Endothelial cell of umbilical vein (primary cell): ENCODE measurements at regions of chr20 and their contacts with region 1.

Region 1: DNA sequence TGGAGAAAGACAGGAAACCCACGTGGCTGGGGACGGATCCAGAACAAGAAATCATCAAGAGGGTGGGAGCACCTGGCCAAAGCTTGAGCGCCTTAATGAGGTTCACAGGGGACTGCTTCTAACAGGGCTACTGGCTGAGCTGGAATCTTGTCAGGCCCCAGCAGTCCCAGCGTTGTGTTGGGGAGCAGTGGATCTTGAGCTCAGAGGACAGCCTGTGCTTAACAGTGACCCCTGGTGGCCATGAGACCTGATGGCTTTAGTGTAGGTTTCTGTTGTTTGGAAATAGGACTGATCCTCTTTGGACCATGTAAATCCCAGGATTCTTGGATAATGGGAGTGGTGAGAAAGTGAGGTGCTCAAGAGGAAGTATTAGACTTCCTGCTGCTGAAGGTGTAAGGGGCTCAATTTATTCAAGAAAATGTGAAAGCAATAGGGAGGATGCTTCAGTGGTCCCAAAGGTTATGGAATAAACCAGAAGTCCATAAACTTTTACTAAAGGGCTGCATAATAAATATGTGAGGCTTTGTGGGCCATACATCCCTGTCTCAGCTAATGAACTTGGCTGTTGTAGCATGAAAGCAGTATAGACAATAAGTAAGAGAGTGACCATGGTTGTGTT is 216.2 kb downstream of the NFATC2 start:
- DNase-seq: peak; percentile 39
- H3K4me3 ChIP-seq: no peak overlapping the region
- H3K27ac ChIP-seq: no peak overlapping the region
- H3K4me1 ChIP-seq: no peaks in the 10 kb centered on the region
- H3K27me3 ChIP-seq: peaks cover 0 to 9% of the 10 kb centered on the region in 2 experiments
- CTCF ChIP-seq: peak; percentile 64 to 80
- POLR2A ChIP-seq: no peak

Region 2: GRCh38 chr20:50980851-50981713 is 345.2 kb before region 1 on chr20:
- CTCF ChIA-PET with region 1: interaction called, 95 read pairs
- POLR2A ChIA-PET with region 1: no interaction called
- dilution Hi-C with region 1: no loop called
- intact Hi-C with region 1: no loop called
- DNase-seq: peak; percentile 58
- H3K4me3 ChIP-seq: no peak overlapping the region
- H3K27ac ChIP-seq: no peak overlapping the region
- H3K4me1 ChIP-seq: no peaks in the 10 kb centered on the region
- H3K27me3 ChIP-seq: peaks cover 2 to 3% of the 10 kb centered on the region in 2 experiments
- CTCF ChIP-seq: peak; percentile 84 to 88
- POLR2A ChIP-seq: no peak

Region 3: GRCh38 chr20:51004248-51004727 is 322.0 kb before region 1 on chr20:
- CTCF ChIA-PET with region 1: no interaction called
- POLR2A ChIA-PET with region 1: no interaction called
- dilution Hi-C with region 1: no loop called
- intact Hi-C with region 1: no loop called
- DNase-seq: no peak
- H3K4me3 ChIP-seq: no peak overlapping the region
- H3K27ac ChIP-seq: no peak overlapping the region
- H3K4me1 ChIP-seq: no peaks in the 10 kb centered on the region
- H3K27me3 ChIP-seq: peaks cover 0 to 3% of the 10 kb centered on the region in 2 experiments
- CTCF ChIP-seq: no peak
- POLR2A ChIP-seq: no peak

Region 4: GRCh38 chr20:51014797-51015722 is 311.2 kb before region 1 on chr20:
- CTCF ChIA-PET with region 1: interaction called, 14 read pairs
- POLR2A ChIA-PET with region 1: no interaction called
- dilution Hi-C with region 1: no loop called
- intact Hi-C with region 1: no loop called
- DNase-seq: peak; percentile 49
- H3K4me3 ChIP-seq: no peak overlapping the region
- H3K27ac ChIP-seq: no peak overlapping the region
- H3K4me1 ChIP-seq: no peaks in the 10 kb centered on the region
- H3K27me3 ChIP-seq: peaks cover 3 to 12% of the 10 kb centered on the region in 2 experiments
- CTCF ChIP-seq: peak; percentile 77 to 79
- POLR2A ChIP-seq: no peak

Region 5: GRCh38 chr20:51154266-51154970 is 171.9 kb before region 1 on chr20:
- CTCF ChIA-PET with region 1: no interaction called
- POLR2A ChIA-PET with region 1: no interaction called
- dilution Hi-C with region 1: no loop called
- intact Hi-C with region 1: no loop called
- DNase-seq: no peak
- H3K4me3 ChIP-seq: no peak overlapping the region
- H3K27ac ChIP-seq: no peak overlapping the region
- H3K4me1 ChIP-seq: no peaks in the 10 kb centered on the region
- H3K27me3 ChIP-seq: peaks cover 10 to 19% of the 10 kb centered on the region in 2 experiments
- CTCF ChIP-seq: no peak
- POLR2A ChIP-seq: no peak

Region 6: GRCh38 chr20:51169813-51170212 is 156.5 kb before region 1 on chr20:
- CTCF ChIA-PET with region 1: no interaction called
- POLR2A ChIA-PET with region 1: no interaction called
- dilution Hi-C with region 1: no loop called
- intact Hi-C with region 1: no loop called
- DNase-seq: no peak
- H3K4me3 ChIP-seq: no peak overlapping the region
- H3K27ac ChIP-seq: no peak overlapping the region
- H3K4me1 ChIP-seq: no peaks in the 10 kb centered on the region
- H3K27me3 ChIP-seq: peaks cover 2 to 7% of the 10 kb centered on the region in 2 experiments
- CTCF ChIP-seq: no peak
- POLR2A ChIP-seq: no peak

Region 7: DNA sequence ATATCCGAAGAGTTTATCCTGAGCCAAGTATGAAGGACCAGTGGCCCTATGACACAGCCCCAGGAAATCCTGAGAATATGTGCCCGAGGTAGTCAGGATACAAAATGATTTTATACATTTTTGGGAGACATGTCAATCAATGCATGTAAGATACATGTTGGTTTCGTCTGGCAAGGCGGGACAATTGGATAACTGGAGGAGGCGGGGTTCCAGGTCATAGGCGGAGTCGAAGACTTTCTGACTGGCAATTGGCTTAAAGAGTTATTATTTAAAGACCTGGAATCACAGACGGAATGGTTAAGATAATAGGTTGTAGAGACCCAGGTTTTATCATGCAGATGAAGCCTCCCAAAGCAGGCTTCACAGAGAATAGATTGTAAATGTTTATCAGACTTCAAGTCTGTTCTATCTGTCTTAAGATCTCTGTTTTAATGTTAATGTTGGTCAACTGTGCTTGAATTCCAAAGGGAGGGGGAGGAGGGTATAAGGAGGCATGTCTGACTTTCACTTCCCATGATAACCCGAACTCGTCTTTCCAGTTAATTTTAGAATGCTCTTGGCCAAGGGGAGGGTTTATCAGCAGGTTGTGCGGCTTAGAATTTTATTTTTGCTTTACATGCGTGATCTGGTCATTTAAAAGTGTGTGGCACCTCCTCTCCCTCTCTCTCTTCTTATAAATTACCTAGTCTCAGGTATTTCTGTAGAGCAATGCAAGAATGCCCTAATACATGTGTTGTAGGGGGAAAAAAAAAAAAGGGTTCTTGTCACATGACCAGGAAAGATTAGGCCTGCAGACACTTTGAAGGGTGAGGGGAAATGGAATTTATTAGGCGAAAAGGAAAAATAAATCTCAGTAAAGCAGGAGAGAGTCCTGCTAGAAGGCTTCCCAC is 14.5 kb before region 1 on chr20:
- CTCF ChIA-PET with region 1: interaction called, 64 read pairs
- POLR2A ChIA-PET with region 1: no interaction called
- dilution Hi-C with region 1: no loop called
- intact Hi-C with region 1: no loop called
- DNase-seq: no peak
- H3K4me3 ChIP-seq: no peak overlapping the region
- H3K27ac ChIP-seq: no peak overlapping the region
- H3K4me1 ChIP-seq: no peaks in the 10 kb centered on the region
- H3K27me3 ChIP-seq: peaks cover 0 to 2% of the 10 kb centered on the region in 2 experiments
- CTCF ChIP-seq: no peak
- POLR2A ChIP-seq: no peak

Region 8: GRCh38 chr20:51345601-51346101 is 19.3 kb after region 1 on chr20:
- CTCF ChIA-PET with region 1: interaction called, 14 read pairs
- POLR2A ChIA-PET with region 1: no interaction called
- dilution Hi-C with region 1: no loop called
- intact Hi-C with region 1: no loop called
- DNase-seq: peak; percentile 57
- H3K4me3 ChIP-seq: no peak overlapping the region
- H3K27ac ChIP-seq: no peak overlapping the region
- H3K4me1 ChIP-seq: peaks cover 8% of the 10 kb centered on the region
- H3K27me3 ChIP-seq: no peaks in the 10 kb centered on the region
- CTCF ChIP-seq: no peak
- POLR2A ChIP-seq: no peak

Region 9: DNA sequence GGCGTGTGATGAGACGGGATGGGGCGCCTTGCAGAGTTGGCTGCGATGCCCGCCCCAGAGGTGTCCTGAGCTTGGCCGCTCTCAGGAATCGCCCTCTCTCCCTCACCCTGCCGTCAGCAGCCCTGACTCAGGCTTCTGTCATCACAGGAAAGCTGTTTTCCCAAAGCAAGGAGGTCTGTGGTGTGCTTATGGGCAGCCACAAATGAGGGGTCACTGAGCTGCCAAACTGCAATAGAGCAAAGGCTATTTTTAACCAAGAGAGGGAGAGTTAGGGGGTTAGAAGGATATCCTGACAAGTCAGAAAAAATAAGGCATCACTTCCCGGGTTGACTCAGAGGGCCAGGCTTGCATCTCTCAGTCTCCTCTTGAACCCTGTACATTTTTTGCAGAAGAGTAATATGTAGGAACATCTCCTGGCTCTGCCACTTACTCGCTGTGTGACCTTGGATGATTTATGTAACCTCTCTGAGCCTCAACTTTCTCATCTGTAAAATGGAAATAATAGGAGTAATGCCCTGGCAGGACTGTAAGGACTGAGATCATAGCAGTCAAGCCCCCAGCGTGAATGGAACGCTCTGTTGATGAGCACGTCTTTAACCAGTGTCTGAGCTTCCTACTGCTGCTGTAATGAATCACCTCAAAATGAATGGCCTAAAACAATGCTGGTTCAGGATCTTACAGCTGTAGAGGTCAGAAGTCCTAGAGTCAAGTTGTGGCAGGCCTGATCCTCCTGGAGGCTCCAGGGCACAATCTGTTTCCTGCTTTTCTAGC is 34.3 kb after region 1 on chr20:
- CTCF ChIA-PET with region 1: interaction called, 17 read pairs
- POLR2A ChIA-PET with region 1: no interaction called
- dilution Hi-C with region 1: no loop called
- intact Hi-C with region 1: no loop called
- DNase-seq: peak; percentile 98
- H3K4me3 ChIP-seq: no peak overlapping the region
- H3K27ac ChIP-seq: peak overlapping the region; percentile 85
- H3K4me1 ChIP-seq: peaks cover 33% of the 10 kb centered on the region
- H3K27me3 ChIP-seq: no peaks in the 10 kb centered on the region
- CTCF ChIP-seq: no peak
- POLR2A ChIP-seq: no peak